CD4-positive, alpha-beta memory T cell (primary cell): ENCODE measurements at regions of chr11 and their contacts with region 1.

Region 1: GRCh38 chr11:65850831-65851811 is 6.9 kb downstream of the CFL1 start:
- DNase-seq: no peak
- H3K4me3 ChIP-seq: no peak overlapping the region
- H3K4me3 Mint-ChIP-seq: no peak overlapping the region
- H3K27ac ChIP-seq: no peak overlapping the region
- H3K27ac Mint-ChIP-seq: peak overlapping the region in 1 of 7 donors; percentile 74
- H3K4me1 ChIP-seq: peaks cover 23% of the 10 kb centered on the region
- H3K4me1 Mint-ChIP-seq: peaks cover 15 to 37% (median 26%) of the 10 kb centered on the region in 4 donors
- H3K27me3 ChIP-seq: no peaks in the 10 kb centered on the region
- H3K27me3 Mint-ChIP-seq: no peaks in the 10 kb centered on the region

Region 2: GRCh38 chr11:65833297-65834030 is 17.7 kb before region 1 on chr11 and contains the start of gene SNX32:
- CTCF ChIA-PET with region 1: interaction called, 4 read pairs
- POLR2A ChIA-PET with region 1: interaction called, 72 read pairs
- intact Hi-C with region 1: no loop called
- DNase-seq: peak; percentile 91 to 94 (median 93)
- H3K4me3 ChIP-seq: peak within 1 kb of the TSS; percentile 31 to 67
- H3K4me3 Mint-ChIP-seq: no peak within 1 kb of the TSS
- H3K27ac ChIP-seq: peak within 1 kb of the TSS; percentile 17
- H3K27ac Mint-ChIP-seq: peak within 1 kb of the TSS in 5 of 7 donors; percentile 29 to 82 (median 70)
- H3K4me1 ChIP-seq: peaks cover 20% of the 10 kb centered on the region
- H3K4me1 Mint-ChIP-seq: peaks cover 8% of the 10 kb centered on the region in 4 donors
- H3K27me3 ChIP-seq: no peaks in the 10 kb centered on the region
- H3K27me3 Mint-ChIP-seq: no peaks in the 10 kb centered on the region
- total RNA-seq, gene SNX32: 0.42 to 0.64 TPM